Endothelial cell of umbilical vein (primary cell): ENCODE measurements at regions of chr2 and their contacts with region 1.

Region 1: GRCh38 chr2:14815201-14815600 is 182.7 kb downstream of the LRATD1 start:
- DNase-seq: no peak
- H3K4me3 ChIP-seq: no peak overlapping the region
- H3K27ac ChIP-seq: no peak overlapping the region
- H3K4me1 ChIP-seq: no peaks in the 10 kb centered on the region
- H3K27me3 ChIP-seq: no peaks in the 10 kb centered on the region
- CTCF ChIP-seq: no peak
- POLR2A ChIP-seq: no peak

Region 2: DNA sequence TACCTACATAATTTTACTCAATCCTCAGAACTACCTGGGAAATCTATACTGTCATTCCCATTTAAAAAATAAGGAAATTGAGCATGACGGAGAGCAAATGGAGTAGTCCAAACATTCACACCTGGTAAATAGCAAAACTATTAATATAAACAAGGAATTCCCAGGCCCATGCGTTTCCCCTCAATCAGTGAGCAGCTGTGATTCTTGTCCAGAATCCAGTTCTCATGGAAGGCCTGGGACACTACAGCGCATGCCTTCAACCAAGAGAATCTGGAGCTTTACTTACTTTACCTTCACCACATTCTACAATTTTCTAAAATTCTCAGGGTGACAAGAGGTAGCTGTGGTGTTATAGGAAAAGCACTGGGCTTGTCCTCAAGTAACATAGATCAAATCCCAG is 76.3 kb after region 1 on chr2:
- CTCF ChIA-PET with region 1: no interaction called
- POLR2A ChIA-PET with region 1: no interaction called
- dilution Hi-C with region 1: no loop called
- intact Hi-C with region 1: loop called (anchors 2 kb)
- DNase-seq: no peak
- H3K4me3 ChIP-seq: no peak overlapping the region
- H3K27ac ChIP-seq: no peak overlapping the region
- H3K4me1 ChIP-seq: no peaks in the 10 kb centered on the region
- H3K27me3 ChIP-seq: no peaks in the 10 kb centered on the region
- CTCF ChIP-seq: no peak
- POLR2A ChIP-seq: no peak